ENCODE measurements at regions of chr12 and their contacts with region 1.

Region 1: GRCh38 chr12:54214553-54215406 is 26.0 kb upstream of the SMUG1 start:
- DNase-seq: peak; percentile 76 to 86
- H3K4me3 ChIP-seq: no peak overlapping the region
- H3K27ac ChIP-seq: no peak overlapping the region
- H3K4me1 ChIP-seq: peaks cover 12 to 26% of the 10 kb centered on the region in 2 donors
- H3K27me3 ChIP-seq: peaks cover 15% of the 10 kb centered on the region
- CTCF ChIP-seq: peak; percentile 67 to 94 (median 80)
- POLR2A ChIP-seq: no peak

Region 2: DNA sequence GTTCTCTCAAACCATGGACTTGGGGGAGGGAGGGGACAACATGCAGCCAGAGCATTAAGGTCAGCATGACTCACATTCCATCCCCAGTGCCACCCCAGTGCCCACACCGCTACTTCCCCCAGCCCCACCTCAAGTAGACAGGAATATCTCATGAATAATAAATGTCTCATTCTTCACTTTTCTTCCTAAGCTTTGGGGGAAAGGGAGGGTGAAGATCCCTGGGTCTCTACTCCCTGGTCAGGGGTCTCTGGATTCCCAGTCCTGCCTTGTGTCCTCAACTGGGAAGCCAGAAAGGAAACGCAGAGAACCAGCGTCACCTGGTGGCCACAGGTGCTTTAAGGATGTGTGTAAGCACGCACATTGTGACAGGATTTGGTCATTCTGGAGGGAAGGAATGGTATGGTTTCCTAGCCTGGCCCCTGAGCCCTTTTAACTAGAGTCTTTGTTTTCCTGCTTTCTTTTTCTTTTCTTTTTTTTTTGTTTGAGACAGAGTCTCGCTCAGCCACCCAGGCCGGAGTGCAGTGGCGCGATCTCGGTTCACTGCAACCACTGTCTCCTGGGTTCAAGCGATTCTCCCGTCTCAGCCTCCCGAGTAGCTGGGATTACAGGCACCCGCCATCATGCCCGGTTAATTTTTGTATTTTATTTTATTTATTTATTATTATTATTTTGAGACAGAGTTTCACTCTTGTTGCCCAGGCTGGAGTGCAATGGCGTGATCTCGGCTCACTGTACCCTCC is 146.1 kb after region 1 on chr12:
- intact Hi-C with region 1: loop called (anchors 5 kb)
- DNase-seq: peak; percentile 88 to 89
- H3K4me3 ChIP-seq: no peak overlapping the region
- H3K27ac ChIP-seq: peak overlapping the region in 2 of 3 donors; percentile 89 to 95
- H3K4me1 ChIP-seq: peaks cover 19 to 37% of the 10 kb centered on the region in 2 donors
- H3K27me3 ChIP-seq: no peaks in the 10 kb centered on the region
- CTCF ChIP-seq: peak; percentile 70 to 99 (median 88)
- POLR2A ChIP-seq: no peak